ENCODE measurements at regions of chr12 and their contacts with region 1.

Region 1: DNA sequence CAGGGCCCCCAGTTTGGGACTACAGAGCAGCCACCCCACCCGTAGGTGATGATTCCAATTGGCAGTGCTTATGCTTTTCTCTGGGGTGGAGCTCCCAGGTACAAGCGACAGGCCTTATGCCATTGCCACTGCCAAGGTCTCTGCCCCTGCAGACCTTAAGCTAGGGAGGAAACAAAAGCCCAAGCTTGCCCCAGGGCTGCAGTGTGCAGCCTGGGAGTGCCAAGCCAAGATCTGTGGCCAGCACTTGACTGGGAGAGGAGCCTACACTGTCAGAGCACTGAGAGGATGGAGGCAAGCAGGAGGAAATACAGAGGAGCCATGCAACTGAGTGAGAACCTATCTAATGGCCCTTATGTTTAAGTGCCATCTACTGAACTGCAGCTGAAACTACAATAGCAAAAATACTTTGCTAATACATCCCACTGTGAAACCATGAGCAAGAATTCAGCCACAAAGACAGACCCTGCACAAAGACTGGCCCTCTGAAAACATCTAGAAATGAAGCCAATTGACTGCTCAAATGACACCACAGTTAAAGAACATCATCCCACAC is 17.7 kb upstream of the ASCL1 start:
- DNase-seq: no peak
- ATAC-seq: peak; percentile 52; the same call in 1 of the 2 replicates
- H3K4me3 ChIP-seq: no peak overlapping the region
- H3K27ac ChIP-seq: no peak overlapping the region
- H3K4me1 ChIP-seq: no peaks in the 10 kb centered on the region
- H3K27me3 ChIP-seq: peaks cover 14% of the 10 kb centered on the region; the same call in 1 of the 2 replicates
- CTCF ChIP-seq: peak; percentile 11 to 34 (median 23); a peak in 3 of 6 replicates
- POLR2A ChIP-seq: no peak
- RAD21 ChIP-seq: peak; percentile 57

Region 2: GRCh38 chr12:102567031-102567985 is 372.4 kb before region 1 on chr12:
- CTCF ChIA-PET with region 1: no interaction called
- POLR2A ChIA-PET with region 1: no interaction called
- RAD21 ChIA-PET with region 1: no interaction called
- intact Hi-C with region 1: no loop called
- DNase-seq: no peak
- ATAC-seq: peak; percentile 40; the same call in 1 of the 2 replicates
- H3K4me3 ChIP-seq: no peak overlapping the region
- H3K27ac ChIP-seq: no peak overlapping the region
- H3K4me1 ChIP-seq: peaks cover 0 to 20% of the 10 kb centered on the region in 2 experiments; a peak in 1 of 4 replicates
- H3K27me3 ChIP-seq: 0 out of 2 replicates have a peak, but pooled peaks cover 2% of the 10 kb centered on the region
- CTCF ChIP-seq: no peak
- POLR2A ChIP-seq: no peak
- RAD21 ChIP-seq: no peak

Region 3: DNA sequence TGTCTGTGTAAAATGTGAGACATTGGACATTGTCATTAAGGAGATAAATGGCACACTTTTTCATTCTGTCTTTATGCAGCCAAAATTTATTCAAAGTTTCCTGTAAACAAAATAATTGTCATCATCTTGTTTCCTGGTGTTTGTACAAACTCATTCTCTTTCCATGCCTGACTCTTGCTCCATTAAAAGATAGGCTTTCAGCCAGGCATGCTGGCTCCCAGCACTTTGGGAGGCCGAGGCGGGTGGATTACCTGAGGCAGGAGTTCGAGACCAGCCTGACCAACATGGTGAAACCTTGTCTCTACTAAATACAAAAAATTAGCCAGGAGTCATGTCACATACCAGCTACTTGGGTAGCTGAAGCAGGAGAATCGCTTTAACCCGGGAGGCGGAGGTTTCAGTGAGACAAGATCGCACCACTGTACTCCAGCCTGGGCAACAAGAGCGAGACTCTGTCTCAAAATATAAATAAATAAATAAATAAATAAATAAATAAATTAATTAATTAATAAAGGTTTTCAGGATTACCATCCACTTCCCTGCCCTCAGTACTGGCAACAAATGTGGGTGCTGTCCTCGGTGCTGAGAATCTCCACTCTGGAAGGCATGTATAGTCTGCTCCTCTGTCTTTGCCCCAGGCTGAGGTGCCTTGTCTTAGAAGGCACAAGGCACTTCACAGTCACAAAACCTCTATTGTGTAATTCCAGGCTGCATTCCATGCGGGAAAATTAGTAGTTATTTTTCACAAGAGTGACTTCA is 105.9 kb before region 1 on chr12:
- CTCF ChIA-PET with region 1: no interaction called
- POLR2A ChIA-PET with region 1: no interaction called
- RAD21 ChIA-PET with region 1: no interaction called
- intact Hi-C with region 1: no loop called
- DNase-seq: no peak
- ATAC-seq: no peak
- H3K4me3 ChIP-seq: no peak overlapping the region
- H3K27ac ChIP-seq: no peak overlapping the region
- H3K4me1 ChIP-seq: no peaks in the 10 kb centered on the region
- H3K27me3 ChIP-seq: peaks cover 8% of the 10 kb centered on the region; the same call in 1 of the 2 replicates
- CTCF ChIP-seq: no peak
- POLR2A ChIP-seq: no peak
- RAD21 ChIP-seq: no peak

Region 4: DNA sequence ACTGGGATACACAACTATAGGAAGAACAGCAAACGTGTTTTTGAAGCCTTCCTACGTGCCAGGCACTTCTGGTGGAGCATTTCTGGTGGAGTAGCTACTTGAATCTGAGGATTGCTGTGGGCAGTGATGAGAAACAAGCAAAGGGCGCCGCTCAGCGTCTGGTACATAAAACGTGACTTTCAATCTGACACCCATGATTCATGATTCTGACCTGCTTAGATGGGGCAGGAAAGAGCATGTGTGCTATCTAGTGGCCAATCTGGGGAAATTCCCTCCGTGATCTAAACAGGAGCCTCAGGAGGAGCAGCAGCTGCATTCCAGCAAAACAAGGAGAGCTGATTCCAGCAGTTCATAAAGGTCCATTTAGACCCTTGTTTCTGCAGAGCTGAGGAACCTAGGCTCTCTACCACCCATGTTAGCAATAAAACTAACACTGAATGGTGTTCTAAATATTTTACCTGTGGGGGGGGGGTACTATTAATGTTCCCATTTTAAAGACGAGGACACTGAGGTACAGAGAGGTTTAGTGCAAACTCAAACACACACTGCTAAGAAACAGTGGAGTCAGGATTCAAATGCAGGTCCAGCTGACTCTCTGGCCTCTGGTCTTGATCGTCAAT is 60.5 kb before region 1 on chr12:
- CTCF ChIA-PET with region 1: interaction called, 24 read pairs
- POLR2A ChIA-PET with region 1: interaction called, 3 read pairs
- RAD21 ChIA-PET with region 1: no interaction called
- intact Hi-C with region 1: loop called (anchors 1 kb)
- DNase-seq: peak; percentile 76
- ATAC-seq: peak; percentile 88
- H3K4me3 ChIP-seq: no peak overlapping the region
- H3K27ac ChIP-seq: no peak overlapping the region
- H3K4me1 ChIP-seq: 0 out of 4 replicates have a peak, but pooled peaks cover 0 to 3% of the 10 kb centered on the region in 2 experiments
- H3K27me3 ChIP-seq: peaks cover 13% of the 10 kb centered on the region; the same call in 1 of the 2 replicates
- CTCF ChIP-seq: peak; percentile 54 to 95 (median 62)
- POLR2A ChIP-seq: no peak
- RAD21 ChIP-seq: peak; percentile 85